BJ (cell line): ENCODE measurements at regions of chr17 and their contacts with region 1.

Region 1: DNA sequence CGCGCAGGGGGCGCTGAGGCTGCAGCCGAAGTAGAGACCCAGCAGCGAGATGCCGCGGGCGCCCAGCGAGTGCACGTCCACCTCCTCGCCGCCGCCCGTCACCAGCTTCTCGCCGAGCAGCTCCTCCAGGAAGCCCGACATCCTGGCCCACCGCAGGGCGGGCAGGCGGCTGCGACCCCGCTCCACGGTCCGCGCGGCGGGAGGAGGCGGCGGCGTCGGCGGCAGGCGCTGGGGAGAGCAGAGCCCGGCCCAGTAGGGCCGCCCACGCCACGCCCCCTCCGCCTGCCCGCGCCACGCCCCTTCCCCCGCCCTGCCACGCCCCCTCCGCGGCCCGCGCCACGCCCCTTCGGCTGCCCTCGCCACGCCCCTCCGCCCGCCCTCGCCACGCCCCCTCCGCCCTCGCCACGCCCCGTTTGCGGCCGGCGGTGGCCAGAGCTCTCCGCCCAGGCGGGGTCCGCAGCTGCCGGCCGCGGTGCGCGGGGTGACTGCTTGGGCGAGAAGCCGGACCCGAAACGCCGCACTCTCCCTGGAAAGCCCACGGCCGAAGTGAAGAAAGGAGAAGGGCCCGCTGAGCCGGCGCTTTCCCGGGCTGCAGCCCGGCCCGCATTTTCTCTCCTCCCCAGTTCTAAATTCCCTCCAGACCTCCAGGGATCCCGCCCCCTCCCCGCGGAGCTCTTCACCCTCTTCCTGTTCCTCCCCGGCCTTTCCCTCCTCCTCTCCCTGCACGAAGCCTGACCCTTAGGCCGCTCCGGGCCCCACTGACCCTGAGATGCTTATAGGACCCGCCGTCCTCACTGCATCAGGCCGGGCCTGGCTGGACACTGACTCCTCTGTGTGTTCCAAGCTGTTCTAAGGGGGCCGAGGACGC is at the start of gene NXN:
- DNase-seq: no peak
- H3K4me3 ChIP-seq: peak within 1 kb of the TSS; percentile 91
- H3K27me3 ChIP-seq: no peaks in the 10 kb centered on the region
- CTCF ChIP-seq: peak; percentile 27
- polyA plus RNA-seq, gene NXN: 65.3 and 88.8 TPM in 2 replicates

Region 2: DNA sequence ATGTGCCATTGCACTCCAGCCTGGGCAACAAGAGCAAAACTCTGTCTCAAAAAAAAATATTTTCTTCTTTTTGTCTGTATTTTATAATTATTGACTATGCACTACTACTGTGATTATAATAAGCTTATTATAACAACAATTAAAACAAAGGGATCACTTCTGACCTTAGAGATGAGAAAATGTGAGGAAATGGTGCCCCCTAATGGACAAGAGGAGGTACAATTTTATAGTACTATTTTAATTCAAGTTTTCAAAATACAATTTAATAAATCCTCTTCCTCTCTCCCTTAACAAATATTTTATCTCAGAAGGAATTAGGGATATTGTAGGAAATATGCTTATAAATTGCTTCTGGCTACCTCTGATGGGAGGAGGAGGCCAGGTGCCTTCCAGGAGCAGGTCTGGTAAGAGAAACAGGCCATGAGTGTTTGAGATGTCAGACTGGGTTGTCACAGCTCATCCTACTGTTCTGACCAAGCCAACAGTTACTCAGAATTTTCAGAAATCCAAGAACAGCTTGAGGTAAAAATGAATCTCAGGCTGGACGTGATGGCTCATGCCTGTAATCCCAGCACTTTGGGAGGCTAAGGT is 279.2 kb before region 1 on chr17:
- CTCF ChIA-PET with region 1: interaction called, 17 read pairs
- POLR2A ChIA-PET with region 1: no interaction called
- DNase-seq: no peak
- H3K4me3 ChIP-seq: no peak overlapping the region
- H3K27me3 ChIP-seq: no peaks in the 10 kb centered on the region
- CTCF ChIP-seq: peak; percentile 43

Region 3: GRCh38 chr17:752002-752619 is 227.7 kb before region 1 on chr17 and contains the start of gene GEMIN4:
- CTCF ChIA-PET with region 1: interaction called, 13 read pairs
- POLR2A ChIA-PET with region 1: interaction called, 3 read pairs
- DNase-seq: peak; percentile 25
- H3K4me3 ChIP-seq: peak within 1 kb of the TSS; percentile 69
- H3K27me3 ChIP-seq: no peaks in the 10 kb centered on the region
- CTCF ChIP-seq: peak; percentile 87
- polyA plus RNA-seq, gene GEMIN4: 10.0 and 15.7 TPM in 2 replicates

Region 4: DNA sequence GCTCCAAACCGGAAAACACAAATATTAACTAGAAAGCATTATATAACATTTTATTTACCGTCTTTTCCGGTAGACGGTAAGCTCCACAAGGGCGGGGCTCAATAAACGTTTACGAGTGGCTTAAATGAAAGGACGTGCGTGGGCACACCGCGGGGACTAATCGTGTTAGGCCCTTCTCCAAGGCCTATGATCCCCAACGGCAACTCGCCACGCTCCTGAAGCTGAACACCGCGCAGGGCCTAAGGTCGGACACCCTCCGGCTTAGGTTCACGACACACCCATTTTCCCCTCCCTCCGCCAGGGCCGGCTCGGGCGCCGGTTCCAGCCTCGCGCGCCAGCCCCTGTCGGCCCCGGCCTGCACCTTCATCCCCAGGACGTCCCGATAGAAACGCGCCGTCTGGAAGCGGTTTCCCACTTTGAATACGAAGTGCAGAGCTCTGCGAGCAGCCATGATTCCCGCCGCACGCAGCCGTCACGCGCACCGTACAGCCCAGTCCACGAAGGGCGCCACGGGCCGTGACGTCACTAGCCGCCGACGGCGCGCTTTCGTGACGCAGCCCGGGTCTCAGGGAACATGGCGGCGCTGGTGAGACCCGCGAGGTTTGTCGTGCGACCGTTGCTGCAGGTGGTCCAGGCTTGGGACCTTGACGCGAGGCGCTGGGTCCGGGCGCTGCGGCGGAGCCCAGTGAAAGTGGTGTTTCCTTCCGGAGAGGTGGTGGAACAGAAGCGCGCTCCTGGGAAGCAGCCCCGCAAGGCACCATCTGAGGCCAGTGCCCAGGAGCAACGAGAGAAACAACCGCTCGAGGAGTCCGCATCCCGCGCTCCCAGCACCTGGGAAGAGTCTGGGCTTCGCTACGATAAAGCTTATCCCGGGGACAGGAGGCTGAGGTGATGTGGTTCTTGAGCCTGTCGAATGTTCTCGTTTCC is 197.7 kb before region 1 on chr17 and contains the starts of genes GLOD4 and MRM3:
- CTCF ChIA-PET with region 1: interaction called, 19 read pairs
- POLR2A ChIA-PET with region 1: no interaction called
- DNase-seq: peak; percentile 48
- H3K4me3 ChIP-seq: peak within 1 kb of the TSS; percentile 96
- H3K27me3 ChIP-seq: no peaks in the 10 kb centered on the region
- CTCF ChIP-seq: peak; percentile 21; the same call in 1 of the 2 replicates
- polyA plus RNA-seq, gene GLOD4: 15.8 and 28.3 TPM in 2 replicates
- polyA plus RNA-seq, gene MRM3: 9.8 and 10.1 TPM in 2 replicates

Region 5: GRCh38 chr17:794876-795275 is 184.9 kb before region 1 on chr17:
- CTCF ChIA-PET with region 1: interaction called, 66 read pairs
- POLR2A ChIA-PET with region 1: interaction called, 8 read pairs
- DNase-seq: no peak
- H3K4me3 ChIP-seq: no peak overlapping the region
- H3K27me3 ChIP-seq: no peaks in the 10 kb centered on the region
- CTCF ChIP-seq: peak; percentile 71

Region 6: GRCh38 chr17:996554-997344 is 17.0 kb after region 1 on chr17 and contains the start of gene TIMM22:
- CTCF ChIA-PET with region 1: interaction called, 47 read pairs
- POLR2A ChIA-PET with region 1: no interaction called
- DNase-seq: peak; percentile 78
- H3K4me3 ChIP-seq: peak within 1 kb of the TSS; percentile 100
- H3K27me3 ChIP-seq: no peaks in the 10 kb centered on the region
- CTCF ChIP-seq: peak; percentile 88
- polyA plus RNA-seq, gene TIMM22: 12.6 and 14.3 TPM in 2 replicates